ENCODE measurements at regions of chr20 and their contacts with region 1.

Region 1: DNA sequence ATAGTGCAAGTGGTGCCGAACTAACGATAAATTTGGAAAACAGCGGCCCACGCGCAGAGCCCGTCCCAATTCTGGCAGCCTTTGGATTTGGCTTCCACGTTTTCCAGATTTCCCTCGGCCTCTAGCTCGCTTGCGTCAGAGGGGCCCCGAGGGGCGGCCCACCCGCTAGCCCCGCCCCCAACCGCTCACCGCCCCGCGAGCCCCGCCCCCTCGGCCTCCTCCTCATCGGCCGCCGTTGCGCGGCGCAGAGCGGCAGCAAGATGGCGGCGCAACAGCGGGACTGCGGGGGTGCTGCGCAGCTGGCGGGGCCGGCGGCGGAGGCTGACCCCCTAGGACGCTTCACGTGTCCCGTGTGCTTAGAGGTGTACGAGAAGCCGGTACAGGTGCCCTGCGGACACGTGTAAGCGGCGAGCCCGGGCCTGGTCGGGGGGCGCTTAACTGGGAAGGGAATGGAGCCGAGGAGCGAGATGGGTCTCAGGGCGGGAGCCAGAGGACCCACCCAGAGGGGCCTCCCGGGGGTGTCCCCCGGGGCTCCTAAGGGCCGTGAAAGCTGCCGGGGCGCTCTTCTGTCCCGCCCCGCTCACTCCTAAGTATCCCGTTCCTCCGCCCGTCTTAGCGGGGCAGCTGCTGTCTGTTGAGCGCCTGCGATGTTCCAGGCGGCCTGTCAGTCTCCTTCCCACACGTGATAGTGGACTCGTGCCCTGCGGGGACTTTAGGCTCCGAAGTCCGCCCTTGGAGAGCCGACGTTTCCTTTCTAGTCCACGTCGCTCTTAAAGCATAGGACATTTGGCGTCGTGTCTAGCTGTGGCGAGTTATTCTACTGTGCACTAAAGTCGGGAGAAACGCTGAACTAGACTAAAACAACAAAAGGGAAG is at the start of gene RNF114:
- DNase-seq: peak; percentile 79 to 92 (median 86)
- ATAC-seq: peak; percentile 99
- H3K4me3 ChIP-seq: peak within 1 kb of the TSS; percentile 90
- H3K4me3 Mint-ChIP-seq: peak within 1 kb of the TSS; percentile 95 to 100 (median 98)
- H3K27ac ChIP-seq: peak within 1 kb of the TSS; percentile 95
- H3K27ac Mint-ChIP-seq: peak within 1 kb of the TSS; percentile 83 to 98 (median 95)
- H3K4me1 ChIP-seq: peaks cover 20 to 27% of the 10 kb centered on the region in 2 donors
- H3K4me1 Mint-ChIP-seq: peaks cover 36 to 61% (median 53%) of the 10 kb centered on the region in 7 donors
- H3K27me3 ChIP-seq: no peaks in the 10 kb centered on the region
- H3K27me3 Mint-ChIP-seq: no peaks in the 10 kb centered on the region
- total RNA-seq, gene RNF114: 67.1 to 113 (median 101) TPM

Region 2: GRCh38 chr20:49713753-49714712 is 222.4 kb before region 1 on chr20 and contains the start of gene B4GALT5:
- CTCF ChIA-PET with region 1: no interaction called
- POLR2A ChIA-PET with region 1: no interaction called
- intact Hi-C with region 1: loop called in 1 of 2 experiments (anchors 5 kb)
- DNase-seq: peak in 8 of 9 donors; percentile 26 to 82 (median 47)
- ATAC-seq: peak; percentile 90
- H3K4me3 ChIP-seq: peak within 1 kb of the TSS; percentile 67
- H3K4me3 Mint-ChIP-seq: peak within 1 kb of the TSS; percentile 86 to 93 (median 90)
- H3K27ac ChIP-seq: peak within 1 kb of the TSS; percentile 66
- H3K27ac Mint-ChIP-seq: peak within 1 kb of the TSS; percentile 53 to 89 (median 81)
- H3K4me1 ChIP-seq: peaks cover 7 to 15% of the 10 kb centered on the region in 2 donors
- H3K4me1 Mint-ChIP-seq: peaks cover 26 to 43% (median 38%) of the 10 kb centered on the region in 7 donors
- H3K27me3 ChIP-seq: no peaks in the 10 kb centered on the region
- H3K27me3 Mint-ChIP-seq: peaks cover 0 to 4% (median 0%) of the 10 kb centered on the region in 5 donors
- total RNA-seq, gene B4GALT5: 3.3 to 23.1 (median 4.6) TPM

Region 3: DNA sequence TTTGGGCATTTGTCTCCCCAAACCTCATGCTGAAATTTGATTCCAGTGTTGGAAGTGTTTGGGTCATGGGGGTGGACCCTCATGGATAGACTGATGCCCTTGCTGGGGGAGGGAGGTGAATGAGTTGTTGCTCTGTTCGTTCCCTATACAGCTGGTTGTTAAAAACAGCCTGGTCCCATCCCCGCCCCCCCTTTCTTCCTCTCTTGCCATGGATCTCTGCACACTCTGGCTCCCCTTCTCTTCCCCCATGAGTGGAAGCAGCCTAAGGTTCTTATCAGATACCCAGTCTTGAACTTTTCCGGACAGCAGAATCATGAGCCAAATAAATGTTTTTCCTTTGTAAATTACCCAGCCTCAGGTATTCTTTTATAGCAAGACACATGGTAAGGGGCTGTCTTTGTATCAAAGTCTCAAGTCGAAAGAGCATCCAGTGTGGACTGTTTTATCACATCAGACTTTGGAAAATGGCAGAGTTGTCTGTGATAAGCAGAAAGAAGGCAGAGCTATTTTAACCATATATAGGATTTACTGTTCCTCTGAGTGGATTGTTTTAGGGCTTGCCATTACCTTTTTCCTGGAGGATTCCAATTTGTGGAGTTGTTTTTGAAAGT is 92.5 kb before region 1 on chr20:
- CTCF ChIA-PET with region 1: no interaction called
- POLR2A ChIA-PET with region 1: no interaction called
- intact Hi-C with region 1: no loop called
- DNase-seq: no peak
- ATAC-seq: no peak
- H3K4me3 ChIP-seq: no peak overlapping the region
- H3K4me3 Mint-ChIP-seq: no peak overlapping the region
- H3K27ac ChIP-seq: no peak overlapping the region
- H3K27ac Mint-ChIP-seq: peak overlapping the region in 5 of 9 donors; percentile 1 to 81 (median 21)
- H3K4me1 ChIP-seq: no peaks in the 10 kb centered on the region
- H3K4me1 Mint-ChIP-seq: peaks cover 0 to 8% (median 3%) of the 10 kb centered on the region in 7 donors
- H3K27me3 ChIP-seq: no peaks in the 10 kb centered on the region
- H3K27me3 Mint-ChIP-seq: no peaks in the 10 kb centered on the region

Region 4: GRCh38 chr20:49915378-49916145 is 20.8 kb before region 1 on chr20 and contains the start of gene SPATA2:
- CTCF ChIA-PET with region 1: interaction called, 3 read pairs
- POLR2A ChIA-PET with region 1: interaction called, 44 read pairs
- intact Hi-C with region 1: loop called (anchors 1 kb)
- DNase-seq: peak; percentile 87 to 99 (median 93)
- ATAC-seq: peak; percentile 88
- H3K4me3 ChIP-seq: peak within 1 kb of the TSS; percentile 93
- H3K4me3 Mint-ChIP-seq: peak within 1 kb of the TSS; percentile 96 to 99 (median 97)
- H3K27ac ChIP-seq: peak within 1 kb of the TSS; percentile 100
- H3K27ac Mint-ChIP-seq: peak within 1 kb of the TSS; percentile 97 to 100 (median 99)
- H3K4me1 ChIP-seq: peaks cover 11 to 16% of the 10 kb centered on the region in 2 donors
- H3K4me1 Mint-ChIP-seq: peaks cover 25 to 48% (median 36%) of the 10 kb centered on the region in 7 donors
- H3K27me3 ChIP-seq: no peaks in the 10 kb centered on the region
- H3K27me3 Mint-ChIP-seq: no peaks in the 10 kb centered on the region
- total RNA-seq, gene SPATA2: 9.0 to 18.4 (median 10.0) TPM

Region 5: GRCh38 chr20:50070991-50071888 is 134.8 kb after region 1 on chr20:
- CTCF ChIA-PET with region 1: no interaction called
- POLR2A ChIA-PET with region 1: no interaction called
- intact Hi-C with region 1: loop called in 1 of 2 experiments (anchors 1 kb)
- DNase-seq: peak; percentile 75 to 99 (median 88)
- ATAC-seq: peak; percentile 100
- H3K4me3 ChIP-seq: peak overlapping the region; percentile 51
- H3K4me3 Mint-ChIP-seq: peak overlapping the region; percentile 59 to 87 (median 72)
- H3K27ac ChIP-seq: no peak overlapping the region
- H3K27ac Mint-ChIP-seq: peak overlapping the region in 1 of 9 donors; percentile 18
- H3K4me1 ChIP-seq: peaks cover 0 to 4% of the 10 kb centered on the region in 2 donors
- H3K4me1 Mint-ChIP-seq: peaks cover 0 to 5% (median 5%) of the 10 kb centered on the region in 7 donors
- H3K27me3 ChIP-seq: no peaks in the 10 kb centered on the region
- H3K27me3 Mint-ChIP-seq: peaks cover 0 to 5% (median 4%) of the 10 kb centered on the region in 5 donors

Region 6: GRCh38 chr20:50929299-50930138 is 993.1 kb after region 1 on chr20:
- CTCF ChIA-PET with region 1: no interaction called
- POLR2A ChIA-PET with region 1: no interaction called
- intact Hi-C with region 1: loop called in 1 of 2 experiments (anchors 2 kb)
- DNase-seq: peak; percentile 74 to 95 (median 93)
- ATAC-seq: peak; percentile 84
- H3K4me3 ChIP-seq: peak overlapping the region; percentile 52
- H3K4me3 Mint-ChIP-seq: peak overlapping the region; percentile 88 to 98 (median 94)
- H3K27ac ChIP-seq: peak overlapping the region; percentile 63
- H3K27ac Mint-ChIP-seq: peak overlapping the region; percentile 85 to 99 (median 96)
- H3K4me1 ChIP-seq: peaks cover 37 to 38% of the 10 kb centered on the region in 2 donors
- H3K4me1 Mint-ChIP-seq: peaks cover 37 to 62% (median 57%) of the 10 kb centered on the region in 7 donors
- H3K27me3 ChIP-seq: no peaks in the 10 kb centered on the region
- H3K27me3 Mint-ChIP-seq: no peaks in the 10 kb centered on the region

Measured in naive thymus-derived CD4-positive, alpha-beta T cell (primary cell).